ENCODE measurements at regions of chr18 and their contacts with region 1.

Region 1: GRCh38 chr18:32158108-32158624 is 31.7 kb upstream of the MEP1B start:
- DNase-seq: peak; percentile 84
- ATAC-seq: peak; percentile 96
- H3K4me3 Mint-ChIP-seq: peak overlapping the region; percentile 53
- H3K27ac Mint-ChIP-seq: no peak overlapping the region
- H3K4me1 Mint-ChIP-seq: peaks cover 9% of the 10 kb centered on the region
- H3K27me3 Mint-ChIP-seq: no peaks in the 10 kb centered on the region
- CTCF ChIP-seq: peak; percentile 59

Region 2: DNA sequence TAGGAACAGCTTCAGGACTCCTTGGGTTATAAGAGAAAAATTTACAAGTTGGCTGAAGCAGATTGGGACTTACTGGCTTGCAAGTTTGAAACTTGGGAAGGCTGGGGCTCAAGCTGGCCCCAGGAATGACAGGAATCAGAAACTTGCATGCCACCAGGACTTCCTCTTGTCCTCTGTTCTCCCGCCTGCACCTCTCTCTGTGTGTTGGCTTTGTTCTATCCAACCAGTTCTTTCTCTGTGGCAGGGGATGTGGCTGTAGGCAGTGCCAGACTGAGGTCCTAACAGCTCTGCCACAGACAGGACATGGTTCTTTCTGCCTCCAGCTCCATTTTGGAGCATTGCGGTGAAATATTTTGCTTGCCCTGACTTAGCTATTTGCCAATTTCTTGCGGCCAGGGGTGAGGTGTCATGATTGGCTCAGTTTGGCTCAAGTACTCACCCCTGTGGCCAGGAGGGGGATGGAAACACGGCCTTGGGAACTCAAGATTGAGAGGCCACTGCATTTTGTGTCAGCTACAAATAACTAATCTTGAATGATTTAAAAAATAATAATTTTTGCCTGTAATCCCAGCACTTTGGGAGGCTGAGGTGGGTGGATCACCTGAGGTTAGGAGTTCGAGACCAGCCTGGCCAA is 80.6 kb after region 1 on chr18:
- CTCF ChIA-PET with region 1: interaction called, 26 read pairs
- POLR2A ChIA-PET with region 1: no interaction called
- DNase-seq: peak; percentile 19
- ATAC-seq: peak; percentile 79
- H3K4me3 Mint-ChIP-seq: no peak overlapping the region
- H3K27ac Mint-ChIP-seq: peak overlapping the region; percentile 70; the same call in 1 of the 2 replicates
- H3K4me1 Mint-ChIP-seq: peaks cover 33% of the 10 kb centered on the region
- H3K27me3 Mint-ChIP-seq: no peaks in the 10 kb centered on the region
- CTCF ChIP-seq: no peak

Region 3: GRCh38 chr18:32261003-32261402 is 102.8 kb after region 1 on chr18:
- CTCF ChIA-PET with region 1: interaction called, 21 read pairs
- POLR2A ChIA-PET with region 1: no interaction called
- DNase-seq: no peak
- ATAC-seq: peak; percentile 93
- H3K4me3 Mint-ChIP-seq: no peak overlapping the region
- H3K27ac Mint-ChIP-seq: no peak overlapping the region
- H3K4me1 Mint-ChIP-seq: no peaks in the 10 kb centered on the region
- H3K27me3 Mint-ChIP-seq: no peaks in the 10 kb centered on the region
- CTCF ChIP-seq: no peak

Region 4: GRCh38 chr18:32271672-32272208 is 113.6 kb after region 1 on chr18:
- CTCF ChIA-PET with region 1: interaction called, 26 read pairs
- POLR2A ChIA-PET with region 1: no interaction called
- DNase-seq: peak; percentile 31
- ATAC-seq: peak; percentile 88
- H3K4me3 Mint-ChIP-seq: no peak overlapping the region
- H3K27ac Mint-ChIP-seq: peak overlapping the region; percentile 10; the same call in 1 of the 2 replicates
- H3K4me1 Mint-ChIP-seq: peaks cover 19% of the 10 kb centered on the region
- H3K27me3 Mint-ChIP-seq: no peaks in the 10 kb centered on the region
- CTCF ChIP-seq: no peak

Region 5: DNA sequence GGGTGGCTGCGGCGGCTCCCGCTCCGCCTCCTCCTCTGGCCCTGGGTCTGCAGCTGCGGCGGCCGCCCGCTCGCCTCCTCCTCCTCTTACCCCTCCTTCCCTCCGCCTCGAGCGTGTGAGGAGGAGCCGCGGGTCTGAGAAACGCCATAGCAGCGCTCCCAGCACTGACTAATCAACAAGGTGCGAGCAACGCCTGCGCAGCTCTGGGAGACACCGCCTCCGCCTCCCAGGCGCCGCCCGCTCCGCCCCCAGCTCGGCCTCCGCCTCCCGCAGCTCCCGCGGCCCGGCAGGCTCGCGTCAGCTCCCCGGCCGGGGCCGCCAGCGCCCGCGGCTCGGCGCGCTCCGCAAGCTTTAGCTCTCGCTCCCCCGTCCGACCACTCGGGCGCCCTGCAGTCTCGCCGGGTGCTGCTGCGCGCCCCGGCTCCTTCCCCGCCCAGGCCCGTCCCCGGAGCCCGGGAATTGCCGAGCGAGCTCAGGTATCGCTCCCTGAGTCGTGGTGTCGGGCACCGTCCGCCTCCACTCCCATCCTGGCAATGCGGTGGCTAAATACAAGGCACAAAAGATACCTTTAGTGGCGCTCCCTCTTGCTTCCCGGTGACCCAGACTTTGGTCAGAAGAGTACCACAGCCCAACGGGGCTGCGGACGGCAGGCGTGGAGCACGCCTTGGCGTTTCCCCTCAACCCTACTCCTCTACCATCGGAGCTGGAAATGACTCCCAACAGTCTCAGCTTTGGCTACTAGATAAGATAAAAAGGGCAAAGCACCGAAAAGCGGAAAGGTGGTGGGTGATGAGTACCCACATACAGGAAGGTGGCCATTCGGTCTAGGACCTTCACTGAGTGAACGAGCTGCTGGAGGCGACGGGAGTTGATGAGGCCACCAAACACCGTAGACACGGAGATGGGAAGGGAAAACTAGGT is 312.8 kb after region 1 on chr18 and contains the start of gene GAREM1:
- CTCF ChIA-PET with region 1: interaction called, 45 read pairs
- POLR2A ChIA-PET with region 1: no interaction called
- DNase-seq: peak; percentile 91
- ATAC-seq: peak; percentile 89
- H3K4me3 Mint-ChIP-seq: peak within 1 kb of the TSS; percentile 93
- H3K27ac Mint-ChIP-seq: peak within 1 kb of the TSS; percentile 89
- H3K4me1 Mint-ChIP-seq: peaks cover 30% of the 10 kb centered on the region
- H3K27me3 Mint-ChIP-seq: peaks cover 29% of the 10 kb centered on the region
- CTCF ChIP-seq: no peak
- total RNA-seq, gene GAREM1: 7.0 to 7.7 TPM (median 7.4 TPM) in 3 replicates

Region 6: DNA sequence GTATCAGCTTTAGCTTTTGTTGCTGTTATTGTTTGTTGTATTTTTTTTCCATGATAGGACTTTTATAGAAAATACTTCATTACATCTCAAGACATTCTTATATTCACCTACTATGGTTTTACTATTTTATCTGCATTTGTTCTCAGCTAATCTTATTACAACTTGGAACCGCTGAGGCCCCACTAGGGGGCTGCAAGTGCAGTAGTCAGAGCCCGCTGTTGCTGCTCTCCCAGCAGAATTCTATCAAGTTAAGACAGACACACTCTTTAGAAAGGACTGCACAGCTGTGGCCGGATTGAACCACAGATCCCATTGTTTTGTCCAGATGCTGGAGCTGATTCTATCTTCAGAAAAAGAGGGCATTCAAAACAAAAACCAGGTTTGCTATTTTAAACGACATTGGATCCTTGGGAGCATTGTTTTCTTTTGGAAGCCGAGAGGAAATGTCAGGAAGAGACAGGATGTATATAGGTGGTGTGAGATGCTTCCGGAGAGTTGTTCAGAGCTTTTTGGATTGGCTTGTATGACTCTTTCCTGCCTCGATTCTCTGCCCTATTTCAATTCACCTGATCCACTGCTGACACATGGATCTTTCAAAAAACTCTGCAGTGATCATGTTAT is 418.2 kb after region 1 on chr18:
- CTCF ChIA-PET with region 1: interaction called, 13 read pairs
- POLR2A ChIA-PET with region 1: no interaction called
- DNase-seq: peak; percentile 40
- ATAC-seq: peak; percentile 91
- H3K4me3 Mint-ChIP-seq: no peak overlapping the region
- H3K27ac Mint-ChIP-seq: no peak overlapping the region
- H3K4me1 Mint-ChIP-seq: no peaks in the 10 kb centered on the region
- H3K27me3 Mint-ChIP-seq: no peaks in the 10 kb centered on the region; the same call in 1 of the 2 replicates
- CTCF ChIP-seq: no peak